Activated CD4-positive, alpha-beta memory T cell treated with anti-CD3 and anti-CD28 coated beads, Interleukin-2, amount 10 ng/mL, durations not matched to agents 7 days and 5 days (primary cell): ENCODE measurements at regions of chr20 and their contacts with region 1.

Region 1: GRCh38 chr20:54103067-54103761 is 32.8 kb upstream of the BCAS1 start:
- DNase-seq: peak; percentile 78
- H3K4me3 Mint-ChIP-seq: no peak overlapping the region
- H3K27ac Mint-ChIP-seq: no peak overlapping the region
- H3K4me1 Mint-ChIP-seq: peaks cover 2% of the 10 kb centered on the region
- H3K27me3 Mint-ChIP-seq: peaks cover 10% of the 10 kb centered on the region

Region 2: GRCh38 chr20:54126809-54127655 is 23.8 kb after region 1 on chr20:
- CTCF ChIA-PET with region 1: interaction called, 10 read pairs
- POLR2A ChIA-PET with region 1: no interaction called
- DNase-seq: no peak
- H3K4me3 Mint-ChIP-seq: no peak overlapping the region
- H3K27ac Mint-ChIP-seq: no peak overlapping the region
- H3K4me1 Mint-ChIP-seq: no peaks in the 10 kb centered on the region
- H3K27me3 Mint-ChIP-seq: no peaks in the 10 kb centered on the region

Region 3: GRCh38 chr20:54199721-54200176 is 96.5 kb after region 1 on chr20:
- CTCF ChIA-PET with region 1: interaction called, 45 read pairs
- POLR2A ChIA-PET with region 1: interaction called, 3 read pairs
- DNase-seq: peak; percentile 71
- H3K4me3 Mint-ChIP-seq: no peak overlapping the region
- H3K27ac Mint-ChIP-seq: no peak overlapping the region
- H3K4me1 Mint-ChIP-seq: no peaks in the 10 kb centered on the region
- H3K27me3 Mint-ChIP-seq: peaks cover 13% of the 10 kb centered on the region